Naive thymus-derived CD4-positive, alpha-beta T cell (primary cell): ENCODE measurements at regions of chr12 and their contacts with region 1.

Region 1: GRCh38 chr12:751192-751998 is 984 bp upstream of the WNK1 start:
- DNase-seq: peak; percentile 52 to 84 (median 75)
- ATAC-seq: peak; percentile 46
- H3K4me3 ChIP-seq: peak overlapping the region; percentile 71
- H3K4me3 Mint-ChIP-seq: no peak overlapping the region
- H3K27ac ChIP-seq: peak overlapping the region; percentile 98
- H3K27ac Mint-ChIP-seq: no peak overlapping the region
- H3K4me1 ChIP-seq: peaks cover 18 to 29% of the 10 kb centered on the region in 2 donors
- H3K4me1 Mint-ChIP-seq: peaks cover 12 to 21% (median 15%) of the 10 kb centered on the region in 7 donors
- H3K27me3 ChIP-seq: no peaks in the 10 kb centered on the region
- H3K27me3 Mint-ChIP-seq: no peaks in the 10 kb centered on the region

Region 2: DNA sequence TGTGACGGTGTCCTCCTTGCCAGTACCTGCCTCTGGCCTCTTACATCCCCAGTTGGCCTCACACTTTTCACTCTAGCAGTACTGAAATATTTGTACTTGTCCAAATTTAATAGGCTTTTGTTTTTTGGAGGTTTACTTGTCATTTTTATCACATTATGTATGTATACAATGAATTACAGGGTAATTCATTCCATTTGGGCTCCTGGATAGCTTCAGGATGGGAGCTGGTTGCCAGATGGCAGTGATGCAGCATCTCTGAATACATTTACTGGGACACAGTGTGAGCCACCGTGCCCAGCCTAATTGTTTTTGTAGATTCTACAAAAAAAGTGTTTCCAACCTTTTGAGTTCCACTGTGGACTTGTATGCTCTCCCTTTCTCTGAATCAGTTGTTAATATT is 336.5 kb before region 1 on chr12:
- CTCF ChIA-PET with region 1: no interaction called
- POLR2A ChIA-PET with region 1: no interaction called
- intact Hi-C with region 1: no loop called
- DNase-seq: no peak
- ATAC-seq: no peak
- H3K4me3 ChIP-seq: no peak overlapping the region
- H3K4me3 Mint-ChIP-seq: no peak overlapping the region
- H3K27ac ChIP-seq: no peak overlapping the region
- H3K27ac Mint-ChIP-seq: no peak overlapping the region
- H3K4me1 ChIP-seq: no peaks in the 10 kb centered on the region
- H3K4me1 Mint-ChIP-seq: peaks cover 0 to 4% (median 0%) of the 10 kb centered on the region in 7 donors
- H3K27me3 ChIP-seq: no peaks in the 10 kb centered on the region
- H3K27me3 Mint-ChIP-seq: no peaks in the 10 kb centered on the region

Region 3: DNA sequence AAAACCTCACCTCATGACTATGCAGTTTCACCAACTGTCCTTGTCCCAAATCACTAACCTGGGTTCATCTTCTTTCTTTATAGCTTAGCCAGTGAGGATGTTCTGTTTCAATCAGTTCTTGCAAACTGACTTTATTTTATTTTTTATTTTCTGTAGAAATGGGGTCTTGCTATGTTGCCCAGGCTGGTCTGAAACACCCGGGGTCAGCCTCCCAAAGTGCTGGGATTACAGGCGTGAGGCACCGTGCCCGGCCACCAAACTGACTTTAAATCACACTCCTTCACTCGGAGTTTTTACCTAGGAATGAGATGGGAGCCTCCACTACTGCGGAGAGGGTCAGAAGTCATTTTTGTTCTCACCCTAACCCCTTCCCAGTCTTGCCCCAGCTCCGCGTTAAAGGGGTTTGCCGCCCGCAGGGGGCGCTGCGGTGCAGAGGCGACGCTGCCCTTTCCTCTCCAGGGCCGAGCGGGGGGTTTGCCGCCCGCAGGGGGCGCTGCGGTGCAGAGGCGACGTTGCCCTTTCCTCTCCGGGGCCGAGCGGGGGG is 298.7 kb before region 1 on chr12:
- CTCF ChIA-PET with region 1: no interaction called
- POLR2A ChIA-PET with region 1: no interaction called
- intact Hi-C with region 1: no loop called
- DNase-seq: peak in 5 of 9 donors; percentile 35 to 84 (median 48)
- ATAC-seq: no peak
- H3K4me3 ChIP-seq: no peak overlapping the region
- H3K4me3 Mint-ChIP-seq: no peak overlapping the region
- H3K27ac ChIP-seq: no peak overlapping the region
- H3K27ac Mint-ChIP-seq: peak overlapping the region in 2 of 9 donors; percentile 55 to 62
- H3K4me1 ChIP-seq: no peaks in the 10 kb centered on the region
- H3K4me1 Mint-ChIP-seq: peaks cover 0 to 8% (median 0%) of the 10 kb centered on the region in 7 donors
- H3K27me3 ChIP-seq: no peaks in the 10 kb centered on the region
- H3K27me3 Mint-ChIP-seq: peaks cover 0 to 35% (median 0%) of the 10 kb centered on the region in 5 donors

Region 4: GRCh38 chr12:569803-570434 is 181.5 kb before region 1 on chr12:
- CTCF ChIA-PET with region 1: interaction called, 38 read pairs
- POLR2A ChIA-PET with region 1: interaction called, 39 read pairs
- intact Hi-C with region 1: loop called (anchors 1 to 2 kb)
- DNase-seq: peak; percentile 72 to 90 (median 84)
- ATAC-seq: peak; percentile 99
- H3K4me3 ChIP-seq: peak overlapping the region; percentile 78
- H3K4me3 Mint-ChIP-seq: peak overlapping the region; percentile 81 to 92 (median 85)
- H3K27ac ChIP-seq: peak overlapping the region; percentile 69
- H3K27ac Mint-ChIP-seq: peak overlapping the region; percentile 47 to 91 (median 80)
- H3K4me1 ChIP-seq: peaks cover 25 to 47% of the 10 kb centered on the region in 2 donors
- H3K4me1 Mint-ChIP-seq: peaks cover 33 to 58% (median 54%) of the 10 kb centered on the region in 7 donors
- H3K27me3 ChIP-seq: no peaks in the 10 kb centered on the region
- H3K27me3 Mint-ChIP-seq: no peaks in the 10 kb centered on the region

Region 5: GRCh38 chr12:642633-643474 is 108.5 kb before region 1 on chr12:
- CTCF ChIA-PET with region 1: interaction called, 10 read pairs
- POLR2A ChIA-PET with region 1: interaction called, 36 read pairs
- intact Hi-C with region 1: loop called (anchors 1 kb)
- DNase-seq: peak; percentile 64 to 86 (median 80)
- ATAC-seq: peak; percentile 88
- H3K4me3 ChIP-seq: peak overlapping the region; percentile 54
- H3K4me3 Mint-ChIP-seq: peak overlapping the region; percentile 78 to 92 (median 82)
- H3K27ac ChIP-seq: peak overlapping the region; percentile 91
- H3K27ac Mint-ChIP-seq: peak overlapping the region; percentile 85 to 98 (median 95)
- H3K4me1 ChIP-seq: peaks cover 20 to 30% of the 10 kb centered on the region in 2 donors
- H3K4me1 Mint-ChIP-seq: peaks cover 26 to 72% (median 60%) of the 10 kb centered on the region in 7 donors
- H3K27me3 ChIP-seq: no peaks in the 10 kb centered on the region
- H3K27me3 Mint-ChIP-seq: no peaks in the 10 kb centered on the region

Region 6: DNA sequence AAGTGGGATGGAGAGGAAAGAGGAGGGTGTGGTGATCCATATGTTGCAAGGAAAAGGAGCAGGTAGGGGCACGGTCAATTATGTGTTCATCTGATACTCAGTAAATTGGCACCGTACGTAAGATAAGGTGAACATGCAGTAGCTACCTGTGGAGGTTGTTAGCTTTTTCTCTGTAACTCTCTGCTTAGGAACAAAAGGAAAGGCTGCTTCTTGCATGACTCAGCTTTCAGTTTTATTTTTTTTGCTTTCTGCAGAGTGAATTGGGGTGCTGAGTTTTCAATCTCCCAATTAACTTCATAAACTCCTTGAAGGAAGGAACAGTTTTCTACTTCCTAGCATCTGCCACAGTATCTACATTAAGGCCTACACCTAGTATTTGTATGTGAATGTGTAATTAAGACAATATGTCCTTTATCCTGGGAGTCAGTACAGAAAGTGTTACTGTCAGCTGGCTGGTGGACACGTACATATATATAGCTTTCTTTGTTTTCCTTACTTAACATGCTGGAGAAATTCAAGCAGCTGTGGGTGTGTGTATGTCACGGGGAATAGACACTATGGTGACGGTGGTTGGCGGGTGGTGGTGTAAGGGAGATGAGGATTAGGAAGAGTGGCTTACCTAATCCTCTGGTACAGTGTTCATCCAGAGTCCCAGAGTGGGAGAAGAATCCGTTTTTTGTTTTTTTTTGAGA is 39.1 kb before region 1 on chr12:
- CTCF ChIA-PET with region 1: interaction called, 8 read pairs
- POLR2A ChIA-PET with region 1: interaction called, 3 read pairs
- intact Hi-C with region 1: loop called in 1 of 2 experiments (anchors 2 kb)
- DNase-seq: no peak
- ATAC-seq: no peak
- H3K4me3 ChIP-seq: no peak overlapping the region
- H3K4me3 Mint-ChIP-seq: no peak overlapping the region
- H3K27ac ChIP-seq: no peak overlapping the region
- H3K27ac Mint-ChIP-seq: no peak overlapping the region
- H3K4me1 ChIP-seq: peaks cover 0 to 4% of the 10 kb centered on the region in 2 donors
- H3K4me1 Mint-ChIP-seq: peaks cover 8 to 26% (median 12%) of the 10 kb centered on the region in 7 donors
- H3K27me3 ChIP-seq: no peaks in the 10 kb centered on the region
- H3K27me3 Mint-ChIP-seq: no peaks in the 10 kb centered on the region

Region 7: DNA sequence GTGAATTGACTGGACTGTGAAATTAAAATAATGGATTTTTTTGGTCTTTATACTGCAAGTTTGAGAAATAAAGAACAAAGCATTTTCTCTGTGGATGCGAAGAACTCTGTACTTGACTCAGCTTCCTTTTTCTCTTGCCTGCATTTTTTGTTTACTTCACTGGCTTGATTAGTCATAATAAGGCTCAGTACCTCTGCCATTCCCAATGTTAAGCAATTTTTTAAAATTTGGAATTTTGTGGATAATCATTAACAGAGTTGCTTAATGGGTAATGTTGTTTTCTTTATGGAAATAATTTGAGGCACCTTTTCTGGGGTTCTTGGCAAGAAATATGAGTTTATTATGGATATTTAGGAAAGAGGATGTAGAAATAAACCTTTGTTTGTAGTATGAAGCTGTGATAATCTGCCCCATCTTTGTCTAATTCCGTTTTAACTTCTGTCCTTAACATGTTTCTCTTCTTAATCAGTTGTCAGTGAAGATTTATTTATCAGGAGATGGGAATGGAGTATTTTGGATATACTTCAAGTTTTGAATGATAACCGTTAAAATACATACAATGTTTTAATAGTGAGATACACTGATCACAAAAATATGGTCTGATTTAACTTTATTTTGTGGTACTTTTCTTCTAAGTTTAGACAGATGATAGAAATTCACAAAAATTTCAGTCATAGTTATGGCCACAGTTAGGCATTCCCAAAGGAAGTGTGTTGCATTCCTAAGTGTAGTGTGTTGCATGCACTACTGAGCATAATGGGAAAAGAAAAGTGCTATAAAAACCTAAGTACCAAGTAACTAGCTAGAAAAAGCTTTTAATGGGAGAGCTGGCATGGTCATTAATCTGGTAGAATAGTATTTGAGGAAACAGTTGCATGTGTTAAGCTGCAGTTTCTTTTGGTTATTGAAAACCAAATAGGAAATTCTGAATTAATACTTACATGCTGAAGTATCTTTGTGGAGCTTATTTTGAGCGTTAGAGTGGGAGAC is 28.6 kb after region 1 on chr12:
- CTCF ChIA-PET with region 1: interaction called, 7 read pairs
- POLR2A ChIA-PET with region 1: interaction called, 4 read pairs
- intact Hi-C with region 1: loop called in 1 of 2 experiments (anchors 1 kb)
- DNase-seq: no peak
- ATAC-seq: no peak
- H3K4me3 ChIP-seq: no peak overlapping the region
- H3K4me3 Mint-ChIP-seq: peak overlapping the region; percentile 24 to 83 (median 72)
- H3K27ac ChIP-seq: no peak overlapping the region
- H3K27ac Mint-ChIP-seq: peak overlapping the region in 8 of 9 donors; percentile 32 to 79 (median 66)
- H3K4me1 ChIP-seq: peaks cover 23 to 49% of the 10 kb centered on the region in 2 donors
- H3K4me1 Mint-ChIP-seq: peaks cover 39 to 85% (median 78%) of the 10 kb centered on the region in 7 donors
- H3K27me3 ChIP-seq: no peaks in the 10 kb centered on the region
- H3K27me3 Mint-ChIP-seq: no peaks in the 10 kb centered on the region

Region 8: DNA sequence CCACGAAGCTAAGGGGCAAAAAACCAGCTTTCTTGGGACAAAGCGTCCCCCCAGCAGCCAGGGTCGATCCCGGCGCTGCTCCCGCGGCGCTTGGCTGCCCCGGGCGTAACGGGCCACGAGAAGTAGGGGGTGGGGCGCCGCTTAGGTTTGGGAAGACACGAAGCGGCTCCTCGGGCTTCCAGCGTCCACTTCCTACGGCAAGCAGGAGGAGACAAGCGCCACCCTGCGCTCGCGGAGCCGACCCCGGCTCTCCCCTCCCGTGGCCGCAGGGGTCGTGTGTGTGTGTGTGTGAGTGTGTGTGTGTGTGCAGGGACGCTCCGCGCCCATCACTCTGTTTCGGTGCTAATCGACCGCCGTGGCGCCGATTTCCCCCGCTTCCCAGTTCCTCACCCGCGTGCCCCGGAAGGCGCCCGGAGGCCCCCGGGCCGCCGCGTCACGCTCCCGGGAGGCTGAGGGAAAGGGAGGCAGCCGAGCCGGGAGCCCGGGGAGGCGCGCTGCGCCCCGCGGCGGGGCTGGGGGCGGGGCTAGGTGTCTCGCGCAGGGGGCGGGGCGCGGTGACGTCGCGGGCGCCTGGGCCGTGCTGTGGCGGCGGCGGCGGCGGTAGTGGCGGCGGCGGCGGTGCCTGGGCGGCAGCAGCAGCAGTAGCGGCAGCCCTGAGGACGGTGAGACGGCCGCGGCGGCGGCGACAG is 239.4 kb after region 1 on chr12 and contains the start of gene ERC1:
- CTCF ChIA-PET with region 1: no interaction called
- POLR2A ChIA-PET with region 1: no interaction called
- intact Hi-C with region 1: loop called (anchors 1 to 2 kb)
- DNase-seq: peak; percentile 77 to 93 (median 87)
- ATAC-seq: peak; percentile 94
- H3K4me3 ChIP-seq: peak within 1 kb of the TSS; percentile 89
- H3K4me3 Mint-ChIP-seq: peak within 1 kb of the TSS; percentile 86 to 100 (median 97)
- H3K27ac ChIP-seq: peak within 1 kb of the TSS; percentile 87
- H3K27ac Mint-ChIP-seq: peak within 1 kb of the TSS; percentile 89 to 98 (median 96)
- H3K4me1 ChIP-seq: peaks cover 0 to 17% of the 10 kb centered on the region in 2 donors
- H3K4me1 Mint-ChIP-seq: peaks cover 34 to 55% (median 46%) of the 10 kb centered on the region in 7 donors
- H3K27me3 ChIP-seq: no peaks in the 10 kb centered on the region
- H3K27me3 Mint-ChIP-seq: no peaks in the 10 kb centered on the region
- total RNA-seq, gene ERC1: 48.6 to 62.0 (median 52.4) TPM